ENCODE measurements at regions of chr6 and their contacts with region 1.

Region 1: DNA sequence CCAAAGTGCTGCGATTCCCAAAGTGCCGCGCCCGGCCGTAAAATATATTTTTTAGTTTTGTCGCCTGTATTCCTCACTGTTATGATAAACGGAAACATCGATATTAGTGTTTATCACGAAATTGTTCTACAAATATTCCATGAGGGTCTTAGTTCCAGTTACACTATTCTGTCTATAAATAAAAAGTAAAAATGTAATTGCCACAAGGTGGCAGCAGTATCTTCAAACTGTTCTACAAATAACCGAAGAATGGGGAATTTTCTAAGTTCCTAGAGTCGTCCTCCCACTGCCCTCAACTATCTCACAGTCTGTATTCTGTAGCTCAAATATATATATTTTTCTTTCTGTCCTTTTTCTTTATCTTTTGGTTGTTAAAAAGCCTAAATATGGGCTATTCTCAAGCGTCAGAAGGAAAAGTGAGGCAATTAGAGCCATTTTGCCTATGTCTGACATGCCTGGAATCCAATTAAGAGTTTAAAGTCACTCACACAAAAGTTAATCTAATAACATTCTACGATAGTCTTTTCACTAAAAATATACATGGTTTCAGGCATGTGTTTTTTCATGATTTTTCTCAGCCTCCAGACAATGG is 14.2 kb upstream of the FAM162B start:
- DNase-seq: no peak
- H3K4me3 ChIP-seq: no peak overlapping the region
- H3K27ac ChIP-seq: no peak overlapping the region
- H3K27me3 ChIP-seq: no peaks in the 10 kb centered on the region
- CTCF ChIP-seq: peak; percentile 50

Region 2: DNA sequence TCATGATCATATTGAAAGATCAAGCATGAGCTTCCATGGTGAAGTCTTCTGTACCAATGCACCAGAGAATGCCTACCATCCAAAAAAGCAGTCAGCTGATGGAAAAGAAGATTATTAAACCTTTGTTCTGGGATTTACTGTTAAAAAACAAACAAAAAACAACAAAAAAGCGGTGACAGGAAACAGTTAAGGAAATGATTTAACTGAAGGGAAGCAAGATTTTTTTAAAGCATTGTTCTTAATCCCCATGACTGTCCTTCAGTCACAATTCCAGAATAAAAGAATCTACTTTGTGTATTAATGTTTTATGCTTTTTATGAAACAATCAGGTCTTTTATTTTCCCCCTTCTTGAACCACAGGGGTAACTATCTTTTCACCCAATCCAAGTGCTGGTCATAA is 38.1 kb before region 1 on chr6:
- CTCF ChIA-PET with region 1: no interaction called
- POLR2A ChIA-PET with region 1: no interaction called
- DNase-seq: no peak
- H3K4me3 ChIP-seq: no peak overlapping the region
- H3K27ac ChIP-seq: no peak overlapping the region
- H3K27me3 ChIP-seq: no peaks in the 10 kb centered on the region
- CTCF ChIP-seq: no peak

Region 3: GRCh38 chr6:116764961-116765851 is 14.5 kb before region 1 on chr6 and contains the start of gene FAM162B:
- CTCF ChIA-PET with region 1: interaction called, 21 read pairs
- POLR2A ChIA-PET with region 1: no interaction called
- DNase-seq: no peak
- H3K4me3 ChIP-seq: peak within 1 kb of the TSS; percentile 63
- H3K27ac ChIP-seq: peak within 1 kb of the TSS; percentile 24
- H3K27me3 ChIP-seq: no peaks in the 10 kb centered on the region
- CTCF ChIP-seq: no peak
- polyA plus RNA-seq, gene FAM162B: 7.8 and 10.9 TPM in 2 replicates

Region 4: DNA sequence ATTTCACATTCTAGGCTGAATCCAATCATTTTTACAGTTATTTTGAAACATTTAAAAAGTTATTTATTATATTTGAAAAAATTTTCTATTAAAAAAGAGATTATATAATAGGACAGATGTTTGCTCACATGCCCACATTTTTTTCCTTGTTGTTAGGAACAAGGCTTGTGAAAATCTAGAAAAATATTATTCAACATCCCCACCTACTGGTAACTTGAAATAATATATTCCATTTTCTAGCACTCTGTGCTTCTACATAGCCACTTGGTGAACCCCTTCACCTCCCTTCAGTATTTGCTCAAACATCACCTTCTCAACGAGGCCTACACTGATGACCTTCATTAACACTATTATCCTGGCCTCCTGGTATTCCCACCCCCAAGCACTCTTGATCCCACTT is 67.6 kb after region 1 on chr6:
- CTCF ChIA-PET with region 1: interaction called, 59 read pairs
- POLR2A ChIA-PET with region 1: no interaction called
- DNase-seq: no peak
- H3K4me3 ChIP-seq: no peak overlapping the region
- H3K27ac ChIP-seq: no peak overlapping the region
- H3K27me3 ChIP-seq: no peaks in the 10 kb centered on the region
- CTCF ChIP-seq: peak; percentile 32; the same call in 1 of the 2 replicates